ENCODE measurements at regions of chr12 and their contacts with region 1.

Region 1: GRCh38 chr12:92570056-92570753 is 132.6 kb upstream of the PLEKHG7 start:
- DNase-seq: no peak
- ATAC-seq: peak; percentile 95
- H3K4me3 Mint-ChIP-seq: no peak overlapping the region
- H3K27ac Mint-ChIP-seq: no peak overlapping the region
- H3K4me1 Mint-ChIP-seq: peaks cover 28% of the 10 kb centered on the region
- H3K27me3 Mint-ChIP-seq: no peaks in the 10 kb centered on the region
- CTCF ChIP-seq: peak; percentile 99

Region 2: DNA sequence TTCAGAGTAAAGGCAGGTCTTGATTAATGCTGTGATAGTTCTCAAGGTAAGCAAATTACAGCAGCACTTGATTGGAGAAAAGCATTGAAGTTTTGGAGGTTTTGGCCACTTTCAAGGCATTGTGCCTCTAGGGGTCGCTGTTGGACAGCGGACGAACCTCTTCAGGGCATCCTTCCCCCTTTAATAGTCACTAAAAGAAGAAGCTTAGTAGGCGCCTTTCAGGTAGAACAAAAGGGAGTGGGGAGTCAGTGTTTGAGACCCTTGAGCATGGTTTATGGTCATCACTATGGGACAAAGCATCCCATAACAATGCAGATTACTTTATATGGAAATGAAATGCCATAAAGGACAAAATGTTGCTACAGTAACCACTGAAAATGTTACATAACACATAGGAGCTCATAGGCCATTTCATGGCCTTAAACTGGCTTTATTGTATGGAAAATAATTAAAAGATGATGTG is 1188.1 kb before region 1 on chr12:
- CTCF ChIA-PET with region 1: interaction called, 38 read pairs
- POLR2A ChIA-PET with region 1: interaction called, 8 read pairs
- intact Hi-C with region 1: loop called (anchors 1 kb)
- DNase-seq: peak; percentile 63
- ATAC-seq: peak; percentile 78
- H3K4me3 Mint-ChIP-seq: peak overlapping the region; percentile 76
- H3K27ac Mint-ChIP-seq: peak overlapping the region; percentile 35
- H3K4me1 Mint-ChIP-seq: peaks cover 4% of the 10 kb centered on the region
- H3K27me3 Mint-ChIP-seq: no peaks in the 10 kb centered on the region
- CTCF ChIP-seq: peak; percentile 62

Region 3: GRCh38 chr12:91926848-91927247 is 643.4 kb before region 1 on chr12:
- CTCF ChIA-PET with region 1: no interaction called
- POLR2A ChIA-PET with region 1: no interaction called
- intact Hi-C with region 1: no loop called
- DNase-seq: no peak
- ATAC-seq: no peak
- H3K4me3 Mint-ChIP-seq: no peak overlapping the region
- H3K27ac Mint-ChIP-seq: no peak overlapping the region
- H3K4me1 Mint-ChIP-seq: no peaks in the 10 kb centered on the region
- H3K27me3 Mint-ChIP-seq: no peaks in the 10 kb centered on the region
- CTCF ChIP-seq: no peak

Region 4: DNA sequence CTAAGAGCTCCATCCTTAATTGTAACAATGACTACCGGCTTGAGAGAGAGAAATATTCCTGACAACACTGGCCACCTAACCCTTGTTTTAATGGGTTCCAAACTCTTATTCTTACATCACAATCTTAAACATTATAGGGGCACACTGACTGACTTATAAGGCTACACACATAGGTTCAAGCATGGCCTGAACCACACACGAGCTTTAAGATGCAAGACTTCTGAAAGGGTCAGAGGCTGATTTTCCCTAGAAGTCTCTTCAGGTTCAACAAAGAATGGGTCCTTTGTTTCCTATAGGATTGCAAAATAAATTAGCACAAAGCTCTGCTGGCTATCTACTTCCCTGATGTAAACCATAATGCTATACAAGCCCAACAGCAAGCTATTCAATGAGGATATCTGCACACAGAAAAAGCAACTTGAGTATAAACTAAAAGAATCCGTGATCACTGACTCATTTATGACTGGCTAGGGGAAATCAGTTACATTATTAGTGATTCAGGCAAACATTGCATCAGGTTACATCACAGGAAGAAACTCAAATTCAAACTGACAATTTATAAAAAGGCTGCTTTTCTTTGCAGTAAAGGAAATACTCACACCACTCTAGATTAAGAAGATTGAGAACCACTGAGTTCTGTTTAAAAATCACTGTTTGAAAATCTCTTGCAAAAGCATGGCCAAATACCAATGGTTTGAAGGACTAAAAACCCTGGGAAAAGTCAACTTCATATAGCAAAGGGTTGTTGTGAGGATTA is 433.1 kb before region 1 on chr12:
- CTCF ChIA-PET with region 1: interaction called, 10 read pairs
- POLR2A ChIA-PET with region 1: interaction called, 16 read pairs
- intact Hi-C with region 1: no loop called
- DNase-seq: no peak
- ATAC-seq: no peak
- H3K4me3 Mint-ChIP-seq: peak overlapping the region; percentile 98
- H3K27ac Mint-ChIP-seq: peak overlapping the region; percentile 69
- H3K4me1 Mint-ChIP-seq: peaks cover 78% of the 10 kb centered on the region
- H3K27me3 Mint-ChIP-seq: no peaks in the 10 kb centered on the region
- CTCF ChIP-seq: no peak

Region 5: DNA sequence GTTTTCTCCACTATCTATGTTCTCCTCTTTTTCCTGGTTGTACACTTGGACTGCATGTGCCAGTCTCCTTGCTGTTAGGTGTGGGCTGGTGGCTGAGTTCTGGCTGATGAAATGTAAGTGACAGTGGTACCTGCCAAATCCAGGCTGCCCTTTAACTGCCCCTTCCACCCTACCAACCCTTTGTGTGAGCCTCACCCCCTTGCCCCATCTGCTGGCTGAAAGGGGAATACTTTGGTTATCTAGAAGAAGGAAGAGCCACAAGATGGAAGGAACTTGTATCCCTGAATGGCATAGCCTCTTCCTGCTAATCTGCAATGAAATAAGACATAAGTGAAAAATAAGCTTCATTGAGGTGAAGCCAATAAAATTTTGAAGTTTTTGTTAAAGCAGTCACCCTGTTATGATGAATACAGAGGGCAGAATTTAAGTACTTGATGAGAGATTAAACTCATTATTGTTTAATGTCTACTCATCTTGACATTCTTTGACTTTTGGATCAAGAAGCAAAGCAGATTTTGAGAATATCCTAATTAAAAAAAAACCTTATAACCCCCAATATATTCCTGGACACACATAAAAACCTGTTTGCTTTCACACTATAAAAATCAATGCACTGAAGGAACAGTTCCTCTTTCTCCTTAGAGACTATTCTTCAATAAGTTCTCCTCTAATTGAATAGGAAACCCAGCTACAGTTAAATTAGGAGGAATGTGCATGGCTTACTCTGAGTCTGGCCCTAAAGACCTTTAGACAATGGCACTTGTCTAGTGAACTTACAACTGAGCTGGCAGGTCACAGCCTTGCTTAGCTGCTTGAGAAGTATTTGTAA is 161.9 kb before region 1 on chr12:
- CTCF ChIA-PET with region 1: interaction called, 25 read pairs
- POLR2A ChIA-PET with region 1: interaction called, 14 read pairs
- intact Hi-C with region 1: loop called (anchors 1 kb)
- DNase-seq: no peak
- ATAC-seq: peak; percentile 42
- H3K4me3 Mint-ChIP-seq: peak overlapping the region; percentile 50
- H3K27ac Mint-ChIP-seq: peak overlapping the region; percentile 88
- H3K4me1 Mint-ChIP-seq: peaks cover 68% of the 10 kb centered on the region
- H3K27me3 Mint-ChIP-seq: no peaks in the 10 kb centered on the region
- CTCF ChIP-seq: no peak

Region 6: GRCh38 chr12:92505254-92506231 is 64.7 kb before region 1 on chr12:
- CTCF ChIA-PET with region 1: interaction called, 58 read pairs
- POLR2A ChIA-PET with region 1: interaction called, 55 read pairs
- intact Hi-C with region 1: loop called (anchors 1 kb)
- DNase-seq: peak; percentile 20
- ATAC-seq: peak; percentile 47
- H3K4me3 Mint-ChIP-seq: peak overlapping the region; percentile 77
- H3K27ac Mint-ChIP-seq: peak overlapping the region; percentile 94
- H3K4me1 Mint-ChIP-seq: peaks cover 64% of the 10 kb centered on the region
- H3K27me3 Mint-ChIP-seq: no peaks in the 10 kb centered on the region
- CTCF ChIP-seq: no peak

Region 7: DNA sequence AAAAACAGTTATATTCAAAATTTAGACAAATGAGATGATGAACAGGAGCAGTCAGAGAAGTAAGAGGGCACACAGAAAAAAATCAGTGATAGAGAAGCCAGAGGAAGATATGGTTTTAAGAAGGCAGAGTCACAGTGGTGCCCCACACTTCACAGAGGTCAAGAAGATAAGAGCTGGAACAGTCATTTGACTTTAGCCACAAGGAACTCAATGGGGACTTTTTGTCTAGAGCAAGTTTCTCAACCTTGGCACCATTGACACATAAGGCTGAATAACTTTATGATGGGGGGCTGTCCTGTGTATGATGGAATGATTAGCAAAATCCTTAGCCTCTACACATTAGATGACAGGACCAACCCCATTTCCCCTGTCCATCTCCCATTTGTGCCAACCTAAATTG is 40.3 kb before region 1 on chr12:
- CTCF ChIA-PET with region 1: no interaction called
- POLR2A ChIA-PET with region 1: no interaction called
- intact Hi-C with region 1: no loop called
- DNase-seq: no peak
- ATAC-seq: peak; percentile 34
- H3K4me3 Mint-ChIP-seq: no peak overlapping the region
- H3K27ac Mint-ChIP-seq: peak overlapping the region; percentile 42
- H3K4me1 Mint-ChIP-seq: peaks cover 28% of the 10 kb centered on the region
- H3K27me3 Mint-ChIP-seq: no peaks in the 10 kb centered on the region
- CTCF ChIP-seq: no peak

Region 8: GRCh38 chr12:92608151-92609091 is 38.2 kb after region 1 on chr12:
- CTCF ChIA-PET with region 1: interaction called, 4 read pairs
- POLR2A ChIA-PET with region 1: no interaction called
- intact Hi-C with region 1: loop called (anchors 1 kb)
- DNase-seq: no peak
- ATAC-seq: no peak
- H3K4me3 Mint-ChIP-seq: peak overlapping the region; percentile 44
- H3K27ac Mint-ChIP-seq: no peak overlapping the region
- H3K4me1 Mint-ChIP-seq: peaks cover 9% of the 10 kb centered on the region
- H3K27me3 Mint-ChIP-seq: no peaks in the 10 kb centered on the region
- CTCF ChIP-seq: no peak

Region 9: GRCh38 chr12:92639017-92639416 is 68.8 kb after region 1 on chr12:
- CTCF ChIA-PET with region 1: no interaction called
- POLR2A ChIA-PET with region 1: no interaction called
- intact Hi-C with region 1: no loop called
- DNase-seq: no peak
- ATAC-seq: no peak
- H3K4me3 Mint-ChIP-seq: no peak overlapping the region
- H3K27ac Mint-ChIP-seq: no peak overlapping the region
- H3K4me1 Mint-ChIP-seq: no peaks in the 10 kb centered on the region
- H3K27me3 Mint-ChIP-seq: no peaks in the 10 kb centered on the region
- CTCF ChIP-seq: no peak

Measured in activated B cell treated with CpG ODN at 0.5 μM for 24 hours (primary cell).